ENCODE measurements at regions of chr4 and their contacts with region 1.

Region 1: GRCh38 chr4:102627831-102628523 is 126.8 kb downstream of the NFKB1 start:
- DNase-seq: peak in 1 of 5 donors; percentile 49
- H3K4me3 ChIP-seq: no peak overlapping the region
- H3K4me3 Mint-ChIP-seq: peak overlapping the region in 4 of 8 donors; percentile 13 to 71 (median 38)
- H3K27ac ChIP-seq: no peak overlapping the region
- H3K27ac Mint-ChIP-seq: peak overlapping the region in 5 of 7 donors; percentile 35 to 93 (median 81)
- H3K4me1 ChIP-seq: peaks cover 66% of the 10 kb centered on the region
- H3K4me1 Mint-ChIP-seq: peaks cover 47 to 94% (median 65%) of the 10 kb centered on the region in 4 donors
- H3K27me3 ChIP-seq: no peaks in the 10 kb centered on the region
- H3K27me3 Mint-ChIP-seq: no peaks in the 10 kb centered on the region

Region 2: DNA sequence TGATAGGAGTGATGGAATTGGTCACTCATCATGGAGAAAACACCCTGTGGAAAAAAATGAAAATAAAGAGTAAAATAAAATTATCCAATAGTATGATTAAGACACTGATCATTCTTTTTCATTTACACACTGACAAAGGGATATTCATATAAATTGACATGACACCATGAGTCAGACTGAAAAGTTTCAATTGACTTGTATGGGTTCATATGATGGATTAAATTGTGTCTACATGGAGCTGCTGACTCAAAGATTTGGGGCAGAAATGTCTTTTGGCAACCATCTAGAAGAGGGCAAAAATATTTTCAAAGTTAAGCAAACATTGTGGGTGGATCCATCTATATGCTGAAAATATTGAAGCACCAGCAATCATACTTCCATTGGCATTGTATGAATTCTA is 1127.2 kb before region 1 on chr4:
- CTCF ChIA-PET with region 1: no interaction called
- POLR2A ChIA-PET with region 1: no interaction called
- intact Hi-C with region 1: no loop called
- DNase-seq: no peak
- H3K4me3 ChIP-seq: no peak overlapping the region
- H3K4me3 Mint-ChIP-seq: no peak overlapping the region
- H3K27ac ChIP-seq: no peak overlapping the region
- H3K27ac Mint-ChIP-seq: no peak overlapping the region
- H3K4me1 ChIP-seq: no peaks in the 10 kb centered on the region
- H3K4me1 Mint-ChIP-seq: no peaks in the 10 kb centered on the region
- H3K27me3 ChIP-seq: no peaks in the 10 kb centered on the region
- H3K27me3 Mint-ChIP-seq: peaks cover 0 to 2% of the 10 kb centered on the region in 2 donors

Region 3: GRCh38 chr4:102640669-102641068 is 12.7 kb after region 1 on chr4:
- CTCF ChIA-PET with region 1: interaction called, 4 read pairs
- POLR2A ChIA-PET with region 1: interaction called, 16 read pairs
- intact Hi-C with region 1: no loop called
- DNase-seq: no peak
- H3K4me3 ChIP-seq: no peak overlapping the region
- H3K4me3 Mint-ChIP-seq: peak overlapping the region in 1 of 8 donors; percentile 15
- H3K27ac ChIP-seq: no peak overlapping the region
- H3K27ac Mint-ChIP-seq: no peak overlapping the region
- H3K4me1 ChIP-seq: no peaks in the 10 kb centered on the region
- H3K4me1 Mint-ChIP-seq: peaks cover 0 to 37% (median 16%) of the 10 kb centered on the region in 4 donors
- H3K27me3 ChIP-seq: no peaks in the 10 kb centered on the region
- H3K27me3 Mint-ChIP-seq: no peaks in the 10 kb centered on the region